K562 (cell line): ENCODE measurements at regions of chr10 and their contacts with region 1.

Region 1: GRCh38 chr10:88986549-88987242 is 3.9 kb upstream of the FAS start:
- DNase-seq: peak in 3 of 4 experiments; percentile 11 to 24 (median 12)
- ATAC-seq: no peak
- H3K4me3 ChIP-seq: no peak overlapping the region
- H3K27ac ChIP-seq: no peak overlapping the region
- H3K4me1 ChIP-seq: peaks cover 0 to 11% of the 10 kb centered on the region in 2 experiments; a peak in 3 of 5 replicates
- H3K27me3 ChIP-seq: peaks cover 0 to 9% of the 10 kb centered on the region in 2 experiments; a peak in 1 of 5 replicates
- CTCF ChIP-seq: peak in 2 of 3 experiments; percentile 33 to 56; a peak in 3 of 6 replicates
- EP300 ChIP-seq: no peak
- POLR2A ChIP-seq: no peak
- RAD21 ChIP-seq: peak; percentile 71 to 72

Region 2: GRCh38 chr10:88835096-88835909 is 151.4 kb before region 1 on chr10:
- CTCF ChIA-PET with region 1: no interaction called
- POLR2A ChIA-PET with region 1: no interaction called
- in situ Hi-C with region 1: no loop called
- intact Hi-C with region 1: loop called (anchors 10 kb)
- DNase-seq: peak; percentile 44 to 72 (median 49)
- ATAC-seq: peak; percentile 97
- H3K4me3 ChIP-seq: no peak overlapping the region
- H3K27ac ChIP-seq: no peak overlapping the region
- H3K4me1 ChIP-seq: no peaks in the 10 kb centered on the region
- H3K27me3 ChIP-seq: no peaks in the 10 kb centered on the region
- CTCF ChIP-seq: peak; percentile 71 to 74 (median 73)
- EP300 ChIP-seq: no peak
- POLR2A ChIP-seq: no peak
- RAD21 ChIP-seq: peak; percentile 50 to 77

Region 3: DNA sequence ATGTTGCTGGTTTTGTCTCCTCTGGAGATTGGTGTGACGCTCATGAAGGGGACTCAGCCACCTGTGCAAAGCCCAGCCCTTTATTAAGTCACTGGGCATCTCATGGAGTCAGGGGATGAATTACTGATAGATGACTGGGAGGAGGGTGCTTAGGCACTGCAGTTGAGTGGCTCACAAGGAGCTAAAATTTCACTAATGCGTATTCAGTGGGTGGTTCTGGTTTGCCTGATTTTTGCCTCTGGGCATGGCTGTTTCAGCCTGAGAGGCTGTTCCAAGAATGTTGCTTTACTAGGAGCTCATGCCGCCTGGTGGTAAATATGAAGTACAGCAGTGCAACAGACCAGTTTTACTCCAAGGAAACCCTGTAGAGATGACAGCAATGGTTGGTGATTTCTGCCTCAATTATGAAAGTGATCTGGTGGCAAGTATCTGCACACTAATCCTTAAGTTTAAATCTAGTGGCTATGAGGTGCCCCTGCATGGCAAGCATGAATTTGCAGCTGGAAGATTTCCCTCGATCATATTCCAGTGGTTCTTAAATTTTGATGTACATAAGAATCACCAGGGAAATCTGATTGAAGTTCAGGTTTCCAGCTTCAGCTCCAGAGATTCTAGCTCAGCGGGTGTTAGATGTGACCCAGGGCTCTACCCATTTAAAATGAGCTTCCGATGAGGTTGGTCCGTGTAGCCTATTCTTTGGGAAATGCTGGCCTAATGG is 54.0 kb before region 1 on chr10:
- CTCF ChIA-PET with region 1: interaction called, 27 read pairs
- POLR2A ChIA-PET with region 1: no interaction called
- in situ Hi-C with region 1: no loop called
- intact Hi-C with region 1: loop called (anchors 2 kb)
- DNase-seq: peak; percentile 19 to 35 (median 28)
- ATAC-seq: peak; percentile 83
- H3K4me3 ChIP-seq: no peak overlapping the region
- H3K27ac ChIP-seq: no peak overlapping the region
- H3K4me1 ChIP-seq: no peaks in the 10 kb centered on the region
- H3K27me3 ChIP-seq: no peaks in the 10 kb centered on the region
- CTCF ChIP-seq: peak; percentile 59 to 64 (median 62)
- EP300 ChIP-seq: no peak
- POLR2A ChIP-seq: no peak
- RAD21 ChIP-seq: peak; percentile 66 to 73